ENCODE measurements at regions of chr2 and their contacts with region 1.

Region 1: DNA sequence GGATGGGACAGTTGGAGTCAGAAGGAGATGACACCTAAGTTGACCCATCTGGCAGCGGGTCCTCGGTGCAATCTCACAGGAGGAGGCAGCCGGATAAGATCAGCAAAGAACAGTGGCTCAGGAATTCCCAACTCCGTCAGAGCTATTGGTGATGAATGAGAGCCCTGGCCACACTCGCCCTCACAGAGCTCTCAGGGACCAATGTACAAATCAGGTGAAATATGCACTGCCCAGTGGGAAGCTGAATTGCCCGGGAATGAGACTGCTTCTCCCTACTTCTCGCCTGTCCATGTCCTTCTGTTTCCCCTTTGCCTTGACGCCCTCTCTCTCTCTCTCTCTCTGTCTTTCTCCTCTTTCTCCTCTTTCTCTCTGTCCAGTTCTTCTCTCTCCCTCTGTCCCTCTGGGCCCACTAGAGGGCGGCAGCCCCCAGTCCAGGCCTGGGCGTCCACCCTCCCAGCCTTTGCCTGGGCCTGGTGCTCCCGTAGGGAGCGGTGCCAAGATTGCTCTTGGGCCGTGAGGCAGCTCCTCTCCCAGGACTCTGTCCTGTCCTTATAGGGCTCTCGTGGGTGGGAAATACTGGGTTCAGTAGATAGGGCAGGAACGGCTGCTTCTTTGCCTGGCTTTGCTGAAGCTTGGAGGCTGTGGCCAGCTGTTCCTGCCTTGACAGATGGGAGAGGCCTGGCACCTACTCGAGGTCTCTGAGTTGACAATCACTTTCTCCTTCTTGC is 28.3 kb upstream of the PUM2 start:
- DNase-seq: peak; percentile 72
- H3K4me3 ChIP-seq: no peak overlapping the region
- H3K27ac ChIP-seq: peak overlapping the region; percentile 31
- H3K27me3 ChIP-seq: peaks cover 2% of the 10 kb centered on the region
- CTCF ChIP-seq: peak; percentile 93

Region 2: GRCh38 chr2:20186078-20186854 is 192.7 kb before region 1 on chr2:
- CTCF ChIA-PET with region 1: no interaction called
- POLR2A ChIA-PET with region 1: no interaction called
- DNase-seq: no peak
- H3K4me3 ChIP-seq: no peak overlapping the region
- H3K27ac ChIP-seq: peak overlapping the region; percentile 47
- H3K27me3 ChIP-seq: no peaks in the 10 kb centered on the region
- CTCF ChIP-seq: no peak

Region 3: GRCh38 chr2:20326163-20326780 is 52.7 kb before region 1 on chr2:
- CTCF ChIA-PET with region 1: interaction called, 14 read pairs
- POLR2A ChIA-PET with region 1: no interaction called
- DNase-seq: peak; percentile 30
- H3K4me3 ChIP-seq: no peak overlapping the region
- H3K27ac ChIP-seq: no peak overlapping the region
- H3K27me3 ChIP-seq: no peaks in the 10 kb centered on the region
- CTCF ChIP-seq: peak; percentile 91

Region 4: GRCh38 chr2:20365249-20365817 is 13.6 kb before region 1 on chr2:
- CTCF ChIA-PET with region 1: interaction called, 59 read pairs
- POLR2A ChIA-PET with region 1: no interaction called
- DNase-seq: no peak
- H3K4me3 ChIP-seq: no peak overlapping the region
- H3K27ac ChIP-seq: no peak overlapping the region
- H3K27me3 ChIP-seq: peaks cover 2% of the 10 kb centered on the region
- CTCF ChIP-seq: no peak

Region 5: GRCh38 chr2:20411361-20411894 is 32.5 kb after region 1 on chr2:
- CTCF ChIA-PET with region 1: interaction called, 31 read pairs
- POLR2A ChIA-PET with region 1: no interaction called
- DNase-seq: peak; percentile 38
- H3K4me3 ChIP-seq: no peak overlapping the region
- H3K27ac ChIP-seq: no peak overlapping the region
- H3K27me3 ChIP-seq: no peaks in the 10 kb centered on the region
- CTCF ChIP-seq: peak; percentile 88

Region 6: DNA sequence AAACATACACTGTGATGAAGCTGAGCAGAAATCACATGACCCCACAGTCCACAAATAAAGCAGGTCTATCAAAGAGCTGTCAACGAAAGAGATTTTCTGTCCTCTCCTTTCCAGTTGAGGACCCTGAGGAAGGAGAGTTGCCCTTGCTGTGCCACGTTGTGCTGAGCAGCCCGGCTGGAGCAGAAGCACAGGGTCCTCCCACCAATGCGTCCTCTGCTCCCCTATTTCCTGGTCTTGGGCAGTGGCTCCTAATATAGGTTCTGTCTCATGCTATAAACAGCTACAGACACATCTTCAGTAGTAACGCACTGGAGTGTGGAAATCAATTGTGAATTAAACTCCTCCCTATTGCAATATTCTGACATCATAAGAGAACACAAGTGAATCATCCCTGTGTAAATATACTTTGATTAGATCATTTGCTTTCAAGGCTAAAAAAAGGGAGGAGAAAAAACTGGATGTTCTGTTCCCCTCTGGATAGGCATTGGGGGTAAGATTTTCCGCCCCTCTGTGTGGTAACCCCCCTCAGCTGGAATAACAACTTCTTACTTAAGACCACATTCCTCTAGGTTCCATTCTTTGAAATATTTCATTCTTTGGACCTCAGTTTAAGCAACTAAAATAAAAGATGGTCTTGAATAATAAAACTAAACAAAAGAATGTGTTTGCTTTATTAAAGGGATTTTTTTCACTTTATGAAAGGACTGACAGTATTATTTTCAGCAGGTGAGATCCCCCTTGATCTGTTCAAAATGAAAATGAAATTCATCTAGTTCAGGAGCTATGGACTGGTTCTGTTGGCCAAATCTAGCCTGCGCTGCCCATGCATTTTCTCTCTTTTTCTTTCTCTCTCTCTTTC is 59.6 kb after region 1 on chr2:
- CTCF ChIA-PET with region 1: interaction called, 24 read pairs
- POLR2A ChIA-PET with region 1: no interaction called
- DNase-seq: no peak
- H3K4me3 ChIP-seq: no peak overlapping the region
- H3K27ac ChIP-seq: peak overlapping the region; percentile 69
- H3K27me3 ChIP-seq: no peaks in the 10 kb centered on the region
- CTCF ChIP-seq: no peak

Region 7: DNA sequence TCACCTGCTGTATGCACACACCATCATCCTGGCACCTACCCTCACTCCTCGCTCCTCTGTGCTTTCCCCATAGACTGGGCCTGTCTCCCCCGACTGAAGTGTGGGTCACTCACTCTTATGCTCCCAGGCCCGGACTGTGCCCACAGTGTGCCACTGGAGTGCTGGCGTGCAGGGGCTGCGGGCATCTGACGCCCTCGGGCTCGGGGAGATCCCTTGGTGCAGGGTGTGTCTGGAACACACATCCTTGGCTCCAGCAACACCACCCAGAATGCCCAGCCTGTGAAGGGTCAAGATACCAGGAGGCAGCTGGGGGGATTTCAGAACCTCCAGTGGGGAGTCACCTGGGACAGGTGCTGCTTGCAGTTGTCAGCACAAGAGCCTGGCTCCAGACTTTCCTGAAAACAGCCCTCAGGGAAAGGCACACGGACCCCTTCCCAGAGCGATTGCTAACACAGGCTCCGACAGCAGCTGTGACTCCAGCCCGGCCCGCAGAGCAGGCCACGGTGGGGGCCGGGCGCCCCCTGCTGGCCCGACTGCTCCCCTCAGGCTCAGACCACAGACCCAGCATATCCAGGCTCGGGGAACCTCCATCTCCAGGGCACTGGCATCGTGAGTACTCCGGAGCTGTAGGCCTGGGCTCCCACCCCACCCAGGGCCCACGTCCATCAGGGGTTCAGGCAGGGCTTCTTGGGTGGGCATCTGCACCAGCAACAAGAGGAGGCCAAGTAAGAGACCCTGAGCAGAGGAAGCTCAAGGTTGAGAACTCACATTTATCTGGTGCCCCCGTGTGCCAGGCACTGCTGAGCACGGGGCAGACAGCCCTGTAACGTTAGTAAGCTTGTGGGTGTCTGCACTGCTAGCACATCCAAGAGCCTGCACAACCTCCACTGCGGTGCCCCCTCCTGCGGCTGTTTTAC is 263.4 kb after region 1 on chr2:
- CTCF ChIA-PET with region 1: interaction called, 37 read pairs
- POLR2A ChIA-PET with region 1: no interaction called
- DNase-seq: no peak
- H3K4me3 ChIP-seq: no peak overlapping the region
- H3K27ac ChIP-seq: no peak overlapping the region
- H3K27me3 ChIP-seq: no peaks in the 10 kb centered on the region
- CTCF ChIP-seq: peak; percentile 94